Left cardiac atrium (tissue), 4 donors: ENCODE measurements at regions of chrX and their contacts with region 1.

Region 1: DNA sequence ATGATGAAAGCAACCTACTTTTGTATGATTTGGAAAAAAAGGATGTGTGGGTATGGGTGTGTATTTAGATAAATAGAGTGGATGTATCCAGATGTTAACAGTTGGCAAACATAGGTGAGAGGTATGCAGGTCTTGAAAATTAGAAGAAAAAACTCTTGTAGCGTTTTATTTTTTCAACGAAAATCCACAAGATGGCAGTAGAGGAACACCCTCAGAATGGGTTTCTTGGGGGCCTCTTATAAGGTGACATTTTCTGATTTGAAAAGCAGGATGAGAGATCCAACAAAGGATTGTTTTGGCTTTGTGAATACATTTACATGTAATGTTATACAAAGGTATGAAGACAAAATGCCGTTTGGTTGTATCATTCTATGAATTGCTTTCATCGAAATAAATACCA is 68.3 kb downstream of the FMR1NB start:
- DNase-seq: no peak
- ATAC-seq: no peak

Region 2: GRCh38 chrX:147693511-147693910 is 355.9 kb before region 1 on chrX:
- intact Hi-C with region 1: no loop called
- DNase-seq: no peak
- ATAC-seq: no peak

Region 3: DNA sequence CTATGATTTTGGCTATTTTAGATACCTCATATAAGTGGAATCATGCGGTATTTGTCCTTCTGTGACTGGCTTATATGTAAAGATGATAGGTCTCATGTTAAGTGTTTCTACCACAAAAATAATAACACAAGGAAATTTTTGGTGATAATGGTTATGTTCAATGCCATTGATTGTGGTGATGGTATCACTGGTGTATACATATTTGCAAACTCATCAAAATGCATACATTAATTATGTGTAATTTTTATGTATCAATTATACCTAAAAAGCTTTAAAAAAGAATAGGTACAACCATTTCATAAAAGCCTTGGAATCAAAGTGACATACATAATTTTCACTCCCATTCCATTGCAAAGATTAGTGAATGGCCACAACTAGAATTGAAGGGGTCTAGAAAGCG is 316.1 kb before region 1 on chrX:
- intact Hi-C with region 1: no loop called
- DNase-seq: no peak
- ATAC-seq: no peak

Region 4: DNA sequence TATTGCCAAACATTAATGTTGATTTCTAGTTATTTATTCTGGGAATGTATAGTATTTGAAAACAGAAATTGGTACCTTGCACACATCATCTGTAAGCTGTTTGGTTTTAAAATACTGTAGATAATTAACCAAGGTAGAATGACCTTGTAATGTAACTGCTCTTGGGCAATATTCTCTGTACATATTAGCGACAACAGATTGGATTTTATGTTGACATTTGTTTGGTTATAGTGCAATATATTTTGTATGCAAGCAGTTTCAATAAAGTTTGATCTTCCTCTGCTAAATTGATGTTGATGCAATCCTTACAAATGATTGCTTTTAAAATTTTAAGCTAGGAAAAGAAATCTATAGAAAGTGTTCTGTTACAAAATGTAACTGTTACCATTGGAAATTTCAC is 99.1 kb before region 1 on chrX:
- intact Hi-C with region 1: no loop called
- DNase-seq: no peak
- ATAC-seq: no peak

Region 5: DNA sequence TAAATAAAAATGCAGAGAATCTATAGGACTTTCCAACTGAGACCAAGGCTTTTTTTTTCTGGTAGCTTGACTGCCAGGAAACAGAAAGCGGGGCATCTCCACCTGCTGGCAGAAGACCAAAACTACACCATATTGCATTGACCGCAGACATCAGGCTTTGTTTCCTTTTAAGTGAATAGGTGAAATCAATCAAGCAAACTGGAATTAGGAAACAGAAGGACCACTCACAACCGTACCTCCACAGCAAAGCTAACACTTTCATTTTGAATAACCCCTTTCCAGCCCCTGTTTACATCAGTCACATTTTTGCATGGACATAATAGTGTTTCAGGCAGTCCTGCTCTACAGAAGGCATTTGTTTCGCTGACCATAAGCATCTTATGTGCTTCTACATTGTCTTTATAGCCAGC is 1237.5 kb after region 1 on chrX:
- intact Hi-C with region 1: loop called in 1 of 2 experiments (anchors 2 kb)
- DNase-seq: no peak
- ATAC-seq: no peak

Region 6: GRCh38 chrX:149470955-149471354 is 1421.5 kb after region 1 on chrX:
- intact Hi-C with region 1: loop called in 1 of 2 experiments (anchors 10 kb)
- DNase-seq: peak; percentile 82
- ATAC-seq: peak; percentile 87 to 96